Ascending aorta (tissue), 2 donors: ENCODE measurements at regions of chr7 and their contacts with region 1.

Region 1: GRCh38 chr7:79452032-79452494 is 1.4 kb downstream of the MAGI2 start:
- DNase-seq: peak; percentile 64 to 93
- H3K4me3 ChIP-seq: peak overlapping the region; percentile 81 to 90
- H3K27ac ChIP-seq: peak overlapping the region; percentile 96 to 98
- H3K4me1 ChIP-seq: peaks cover 4 to 10% of the 10 kb centered on the region in 2 donors
- H3K27me3 ChIP-seq: no peaks in the 10 kb centered on the region
- CTCF ChIP-seq: no peak

Region 2: DNA sequence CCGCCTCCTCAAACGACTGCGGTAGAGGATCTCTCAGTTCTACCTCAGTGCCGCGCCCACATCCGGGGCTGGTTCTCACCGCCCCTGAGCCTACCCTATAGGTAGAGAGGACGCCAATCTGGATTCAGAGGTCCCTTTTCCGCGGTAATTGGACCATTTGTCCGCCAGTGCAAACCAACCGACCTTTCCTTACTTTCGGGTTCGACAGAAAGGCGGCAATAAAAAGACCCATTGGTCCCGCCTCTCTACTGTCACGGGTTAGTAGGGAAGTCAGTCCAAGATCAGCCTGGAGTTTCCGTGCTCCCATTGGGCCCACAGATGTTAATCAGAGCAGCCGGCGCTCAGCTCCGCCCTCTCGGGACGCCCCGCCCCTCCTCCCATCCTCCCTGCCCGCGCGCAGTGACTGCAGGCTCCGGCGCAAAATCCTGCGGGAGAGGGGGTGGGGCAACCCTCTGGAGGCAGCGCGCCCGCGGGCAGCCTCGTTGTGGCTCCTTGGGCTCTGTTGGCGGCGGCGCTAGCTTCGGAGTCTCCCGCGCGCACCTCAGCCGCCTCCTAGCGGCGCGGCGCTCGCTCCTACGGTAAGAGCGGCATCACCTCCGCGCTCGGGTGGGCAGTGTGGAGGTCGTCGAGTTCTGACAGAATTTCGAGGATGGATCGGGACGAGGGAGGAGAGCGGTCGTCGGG is 1653.5 kb before region 1 on chr7 and contains the starts of genes PHTF2 and TMEM60:
- intact Hi-C with region 1: loop called (anchors 5 kb)
- DNase-seq: peak; percentile 97 to 99
- H3K4me3 ChIP-seq: peak within 1 kb of the TSS; percentile 88 to 90
- H3K27ac ChIP-seq: peak within 1 kb of the TSS; percentile 91 to 97
- H3K4me1 ChIP-seq: peaks cover 4 to 8% of the 10 kb centered on the region in 2 donors
- H3K27me3 ChIP-seq: no peaks in the 10 kb centered on the region
- CTCF ChIP-seq: peak; percentile 39 to 54 (median 48)
- total RNA-seq, gene PHTF2: 10.2 TPM
- total RNA-seq, gene TMEM60: not detected

Region 3: DNA sequence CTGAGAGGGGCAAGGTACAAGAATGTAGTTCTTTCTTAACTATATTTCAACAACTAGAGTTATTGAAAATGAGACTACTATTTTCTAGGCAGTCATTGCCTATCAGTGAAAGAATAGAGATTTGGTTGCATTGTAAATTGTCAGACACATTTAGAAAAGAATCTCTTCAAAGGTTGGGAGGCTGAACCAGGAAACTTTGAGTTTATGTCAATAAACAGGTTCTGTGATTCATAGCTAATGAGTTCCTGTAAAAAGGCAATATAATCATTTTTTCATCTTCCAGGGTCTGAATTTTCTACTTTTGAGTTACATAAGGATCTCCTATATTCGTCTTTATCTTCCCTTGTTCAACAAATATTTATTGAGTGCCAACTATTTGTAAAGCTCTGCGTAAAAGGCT is 45.7 kb before region 1 on chr7:
- intact Hi-C with region 1: loop called (anchors 5 kb)
- DNase-seq: no peak
- H3K4me3 ChIP-seq: no peak overlapping the region
- H3K27ac ChIP-seq: no peak overlapping the region
- H3K4me1 ChIP-seq: peaks cover 0 to 17% of the 10 kb centered on the region in 2 donors
- H3K27me3 ChIP-seq: no peaks in the 10 kb centered on the region
- CTCF ChIP-seq: no peak

Region 4: GRCh38 chr7:80134536-80135320 is 682.7 kb after region 1 on chr7 and contains the start of gene GNAI1:
- intact Hi-C with region 1: loop called (anchors 10 kb)
- DNase-seq: peak; percentile 26 to 87
- H3K4me3 ChIP-seq: peak within 1 kb of the TSS; percentile 64 to 92
- H3K27ac ChIP-seq: peak within 1 kb of the TSS; percentile 85 to 93
- H3K4me1 ChIP-seq: peaks cover 0 to 24% of the 10 kb centered on the region in 2 donors
- H3K27me3 ChIP-seq: no peaks in the 10 kb centered on the region
- CTCF ChIP-seq: peak; percentile 8 to 33 (median 25)
- total RNA-seq, gene GNAI1: 8.7 TPM

Region 5: GRCh38 chr7:80240265-80241025 is 788.4 kb after region 1 on chr7:
- intact Hi-C with region 1: no loop called
- DNase-seq: no peak
- H3K4me3 ChIP-seq: no peak overlapping the region
- H3K27ac ChIP-seq: no peak overlapping the region
- H3K4me1 ChIP-seq: no peaks in the 10 kb centered on the region
- H3K27me3 ChIP-seq: no peaks in the 10 kb centered on the region
- CTCF ChIP-seq: no peak